HEK293T (cell line): ENCODE measurements at regions of chr1 and their contacts with region 1.

Region 1: GRCh38 chr1:63691701-63692425 is 82.0 kb upstream of the ROR1 start:
- DNase-seq: peak; percentile 84

Region 2: DNA sequence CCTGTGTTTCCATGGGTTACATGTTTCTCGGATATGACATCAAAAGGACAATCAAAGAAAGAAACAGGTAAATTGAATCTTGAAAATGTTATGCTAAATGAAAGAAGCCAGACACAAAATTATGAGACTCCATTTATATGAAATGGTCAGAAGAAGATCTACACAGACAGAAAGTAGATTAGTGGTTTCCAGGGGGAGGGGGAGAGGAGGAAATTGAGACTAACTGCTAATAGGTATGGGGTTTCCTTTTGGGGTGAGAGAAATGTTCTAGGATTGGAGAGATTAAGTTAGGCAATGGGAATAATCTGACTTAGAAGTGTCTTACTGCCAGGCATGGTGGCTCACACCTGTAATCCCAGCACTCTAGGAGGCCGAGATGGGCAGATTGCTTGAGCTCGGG is 190.6 kb before region 1 on chr1:
- CTCF ChIA-PET with region 1: no interaction called
- POLR2A ChIA-PET with region 1: no interaction called
- DNase-seq: no peak

Region 3: DNA sequence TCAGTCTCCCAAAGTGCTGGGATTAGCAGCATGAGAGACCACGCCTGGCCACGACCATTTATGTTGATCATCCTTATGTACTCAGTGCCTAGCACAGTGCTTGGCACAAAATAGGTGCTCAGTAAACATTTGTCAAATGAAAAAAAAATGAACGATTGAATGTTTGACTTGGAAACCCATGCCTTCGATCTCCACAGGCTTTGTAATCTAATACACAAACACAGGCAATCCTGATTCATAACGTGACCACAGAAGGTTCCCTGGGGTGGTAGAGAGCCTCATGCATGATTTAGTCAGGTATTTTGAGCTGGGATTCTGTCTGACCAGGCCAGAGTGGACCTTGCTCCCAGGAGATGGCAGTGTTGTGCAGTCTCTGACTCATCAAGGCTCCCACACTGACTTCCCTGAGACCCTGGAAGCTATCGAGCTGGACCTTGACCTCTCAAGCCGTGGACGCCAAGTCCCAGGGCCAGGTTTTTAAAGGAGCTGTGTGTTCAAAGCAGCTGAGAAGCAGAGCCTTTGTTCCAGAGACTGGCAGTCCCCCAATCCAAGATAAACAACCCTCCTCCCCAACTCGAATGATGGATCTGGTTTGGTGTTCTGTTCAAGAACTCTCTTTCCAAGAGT is 17.5 kb before region 1 on chr1:
- CTCF ChIA-PET with region 1: interaction called, 18 read pairs
- POLR2A ChIA-PET with region 1: no interaction called
- DNase-seq: peak; percentile 89

Region 4: DNA sequence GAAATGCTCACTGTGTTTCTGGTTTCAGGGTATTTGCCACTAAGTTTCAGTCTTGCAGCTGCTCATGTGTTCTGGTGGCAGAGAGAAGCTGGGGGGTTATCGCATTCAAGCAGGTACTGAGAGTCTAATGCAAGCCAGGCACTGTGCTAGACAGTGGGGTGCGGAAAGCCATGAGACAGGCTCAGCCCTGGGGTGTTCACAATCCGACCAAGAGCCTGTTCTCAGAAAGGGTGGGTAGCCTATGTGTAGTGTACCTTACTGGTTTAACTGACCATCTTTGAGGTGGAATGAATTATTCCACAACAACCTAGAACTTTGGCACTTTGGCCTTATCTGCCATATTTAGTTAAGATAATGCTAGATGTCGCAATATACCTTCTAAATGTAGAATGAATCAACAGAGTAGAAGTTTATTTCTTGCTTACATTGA is 26.7 kb after region 1 on chr1:
- CTCF ChIA-PET with region 1: no interaction called
- POLR2A ChIA-PET with region 1: no interaction called
- DNase-seq: no peak

Region 5: GRCh38 chr1:63868268-63868781 is 176.5 kb after region 1 on chr1:
- CTCF ChIA-PET with region 1: interaction called, 10 read pairs
- POLR2A ChIA-PET with region 1: no interaction called
- DNase-seq: peak; percentile 53

Region 6: DNA sequence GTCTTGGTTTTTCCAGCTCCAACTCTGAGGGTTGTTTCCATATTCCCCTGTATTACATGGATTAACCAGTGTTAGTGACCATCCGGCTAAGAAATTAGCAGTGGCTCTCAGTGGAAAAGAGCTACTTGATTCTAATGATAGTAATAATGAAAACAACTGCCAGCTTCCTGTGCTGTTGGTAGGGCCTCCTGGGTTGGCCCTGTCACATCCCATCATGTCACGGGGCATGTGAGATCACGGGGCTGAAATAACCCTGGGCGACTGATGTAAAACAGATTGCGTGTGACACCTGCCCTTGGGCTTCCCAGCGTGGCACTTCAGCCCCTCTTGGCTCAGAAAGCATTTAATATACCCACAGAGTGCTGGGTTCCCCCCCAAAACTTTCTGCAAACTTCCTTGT is 231.0 kb after region 1 on chr1:
- CTCF ChIA-PET with region 1: interaction called, 10 read pairs
- POLR2A ChIA-PET with region 1: no interaction called
- DNase-seq: no peak

Region 7: DNA sequence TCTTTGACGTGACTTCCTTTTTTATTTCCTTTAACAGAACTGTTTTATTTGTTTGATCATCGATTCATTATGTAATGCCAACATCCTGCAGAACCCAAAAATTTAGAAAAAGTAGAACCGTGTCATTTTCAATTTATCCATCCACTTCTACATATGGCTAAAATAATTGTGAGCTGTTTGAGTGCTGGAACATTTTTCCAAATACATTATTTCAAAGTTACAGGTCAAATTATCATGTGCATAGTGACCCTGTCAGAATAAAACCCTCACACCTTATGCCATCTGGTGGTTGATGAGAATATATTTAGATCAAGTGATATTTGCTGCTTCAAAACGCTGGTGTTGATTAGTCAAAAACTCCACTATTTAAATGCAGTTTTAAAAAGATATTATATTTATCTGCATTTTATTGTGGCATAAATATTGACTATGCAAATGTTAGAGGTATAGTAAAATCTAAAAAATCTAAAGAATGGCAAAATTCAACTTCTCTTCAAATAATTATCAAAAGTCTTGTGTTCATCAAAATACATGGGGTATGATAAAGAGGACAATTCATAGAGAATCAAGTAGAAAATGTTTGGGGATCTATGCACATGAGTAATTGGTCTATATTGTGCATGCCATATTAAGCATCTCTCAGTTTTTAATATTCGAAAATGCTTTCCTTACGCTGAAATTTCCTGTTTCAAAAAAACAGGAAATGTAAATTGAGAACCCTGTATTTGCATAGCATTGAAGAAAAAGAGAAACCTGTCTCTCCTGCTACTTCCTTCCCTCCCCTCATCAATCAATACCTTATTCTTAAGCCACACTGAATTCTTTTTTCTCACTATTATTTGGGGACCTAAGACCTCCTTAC is 551.3 kb after region 1 on chr1:
- CTCF ChIA-PET with region 1: interaction called, 18 read pairs
- POLR2A ChIA-PET with region 1: no interaction called
- DNase-seq: no peak